ENCODE measurements at regions of chr12 and their contacts with region 1.

Region 1: DNA sequence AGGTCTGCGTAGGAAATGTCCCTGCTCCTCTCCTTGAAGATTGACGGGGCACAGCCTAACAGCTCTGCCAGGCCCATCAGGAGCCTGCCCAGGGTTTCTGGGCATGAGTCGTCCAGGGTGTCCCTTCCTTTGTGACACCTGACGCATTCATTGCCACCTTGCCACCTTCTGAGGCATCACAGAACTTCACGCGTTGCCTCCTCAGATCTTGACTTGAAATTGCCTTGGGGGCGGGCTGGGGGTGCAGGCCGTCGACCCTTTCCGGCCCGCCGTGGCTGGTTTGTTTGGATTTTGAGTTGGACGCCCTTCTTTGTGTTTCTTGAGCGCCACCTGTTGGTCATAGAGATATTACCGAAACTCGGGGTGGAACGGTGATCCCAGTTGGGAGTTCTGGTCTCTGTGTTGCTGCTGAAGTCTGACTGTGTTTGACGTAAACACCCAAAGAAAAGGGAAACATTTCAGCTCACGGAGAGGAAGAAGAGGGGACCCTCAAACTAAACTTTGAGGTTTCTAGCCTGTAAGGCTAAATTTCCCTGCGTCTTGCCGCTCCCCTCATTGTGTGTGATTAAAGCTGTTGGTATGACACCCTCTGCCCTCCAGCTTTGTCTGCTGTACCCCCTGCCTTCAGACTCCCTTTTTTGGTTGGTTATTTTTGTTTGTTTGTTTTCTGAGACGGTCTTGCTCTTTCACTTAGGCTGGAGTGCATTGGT is 44.6 kb downstream of the MLXIP start:
- DNase-seq: peak; percentile 70
- H3K4me3 ChIP-seq: no peak overlapping the region
- H3K27ac ChIP-seq: no peak overlapping the region
- H3K4me1 ChIP-seq: peaks cover 6% of the 10 kb centered on the region
- H3K27me3 ChIP-seq: no peaks in the 10 kb centered on the region
- CTCF ChIP-seq: peak; percentile 65 to 67
- POLR2A ChIP-seq: no peak

Region 2: GRCh38 chr12:122064025-122064777 is 59.0 kb before region 1 on chr12:
- CTCF ChIA-PET with region 1: interaction called, 40 read pairs
- POLR2A ChIA-PET with region 1: interaction called, 4 read pairs
- dilution Hi-C with region 1: no loop called
- intact Hi-C with region 1: no loop called
- DNase-seq: peak; percentile 95
- H3K4me3 ChIP-seq: no peak overlapping the region
- H3K27ac ChIP-seq: peak overlapping the region; percentile 60
- H3K4me1 ChIP-seq: peaks cover 37% of the 10 kb centered on the region
- H3K27me3 ChIP-seq: no peaks in the 10 kb centered on the region
- CTCF ChIP-seq: peak; percentile 48 to 57
- POLR2A ChIP-seq: peak; percentile 58

Region 3: GRCh38 chr12:122087431-122088178 is 35.6 kb before region 1 on chr12:
- CTCF ChIA-PET with region 1: interaction called, 42 read pairs
- POLR2A ChIA-PET with region 1: no interaction called
- dilution Hi-C with region 1: no loop called
- intact Hi-C with region 1: no loop called
- DNase-seq: no peak
- H3K4me3 ChIP-seq: no peak overlapping the region
- H3K27ac ChIP-seq: no peak overlapping the region
- H3K4me1 ChIP-seq: peaks cover 15% of the 10 kb centered on the region
- H3K27me3 ChIP-seq: no peaks in the 10 kb centered on the region
- CTCF ChIP-seq: no peak
- POLR2A ChIP-seq: no peak

Region 4: DNA sequence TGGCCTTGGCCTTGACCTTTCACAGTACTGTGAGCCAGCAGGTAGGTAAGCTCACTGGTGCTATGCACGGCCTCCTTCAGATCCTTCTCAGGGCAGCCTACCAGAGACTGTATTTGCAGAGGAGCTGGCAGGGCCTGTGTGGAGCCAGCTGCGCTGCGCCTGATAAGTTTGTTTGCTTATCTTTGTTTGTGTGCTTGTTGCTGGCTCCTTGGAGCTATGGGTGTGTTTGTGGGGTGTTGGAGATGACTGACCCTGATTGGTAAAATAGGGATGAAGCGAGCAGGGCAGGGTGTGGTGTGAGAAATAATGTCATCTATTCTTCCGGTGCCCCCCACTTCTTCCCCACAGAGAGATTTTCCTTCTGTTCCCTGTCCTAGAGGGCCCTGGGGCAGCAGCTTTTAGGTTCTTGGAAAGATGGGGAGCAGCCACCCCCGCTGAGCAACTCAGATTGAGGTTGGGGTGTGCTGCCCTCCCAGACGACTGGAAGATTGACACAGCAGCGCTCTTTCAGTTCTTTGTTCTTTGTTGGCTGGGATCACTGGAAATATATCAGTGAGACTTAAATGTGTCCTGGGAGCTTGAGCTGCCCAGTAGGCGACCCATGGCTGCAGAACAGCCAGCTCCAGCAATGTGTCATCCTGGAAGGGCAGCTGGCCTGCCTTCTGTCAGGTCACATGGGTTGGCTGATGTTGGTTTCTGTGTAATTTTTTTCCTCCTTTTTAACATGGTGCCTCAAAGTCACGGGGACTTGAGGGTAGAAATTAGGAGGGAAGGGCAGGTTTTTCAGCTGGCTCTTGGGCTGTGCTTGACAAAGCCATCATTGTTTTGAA is 25.1 kb before region 1 on chr12:
- CTCF ChIA-PET with region 1: interaction called, 30 read pairs
- POLR2A ChIA-PET with region 1: no interaction called
- dilution Hi-C with region 1: no loop called
- intact Hi-C with region 1: no loop called
- DNase-seq: peak; percentile 67
- H3K4me3 ChIP-seq: no peak overlapping the region
- H3K27ac ChIP-seq: peak overlapping the region; percentile 31
- H3K4me1 ChIP-seq: peaks cover 31% of the 10 kb centered on the region
- H3K27me3 ChIP-seq: no peaks in the 10 kb centered on the region
- CTCF ChIP-seq: no peak
- POLR2A ChIP-seq: no peak

Region 5: GRCh38 chr12:122107261-122107660 is 15.9 kb before region 1 on chr12:
- CTCF ChIA-PET with region 1: interaction called, 19 read pairs
- POLR2A ChIA-PET with region 1: no interaction called
- dilution Hi-C with region 1: no loop called
- intact Hi-C with region 1: no loop called
- DNase-seq: no peak
- H3K4me3 ChIP-seq: no peak overlapping the region
- H3K27ac ChIP-seq: no peak overlapping the region
- H3K4me1 ChIP-seq: peaks cover 6% of the 10 kb centered on the region
- H3K27me3 ChIP-seq: no peaks in the 10 kb centered on the region
- CTCF ChIP-seq: no peak
- POLR2A ChIP-seq: no peak

Measured in endothelial cell of umbilical vein (primary cell).